CD4-positive, alpha-beta T cell (primary cell): ENCODE measurements at regions of chr17 and their contacts with region 1.

Region 1: DNA sequence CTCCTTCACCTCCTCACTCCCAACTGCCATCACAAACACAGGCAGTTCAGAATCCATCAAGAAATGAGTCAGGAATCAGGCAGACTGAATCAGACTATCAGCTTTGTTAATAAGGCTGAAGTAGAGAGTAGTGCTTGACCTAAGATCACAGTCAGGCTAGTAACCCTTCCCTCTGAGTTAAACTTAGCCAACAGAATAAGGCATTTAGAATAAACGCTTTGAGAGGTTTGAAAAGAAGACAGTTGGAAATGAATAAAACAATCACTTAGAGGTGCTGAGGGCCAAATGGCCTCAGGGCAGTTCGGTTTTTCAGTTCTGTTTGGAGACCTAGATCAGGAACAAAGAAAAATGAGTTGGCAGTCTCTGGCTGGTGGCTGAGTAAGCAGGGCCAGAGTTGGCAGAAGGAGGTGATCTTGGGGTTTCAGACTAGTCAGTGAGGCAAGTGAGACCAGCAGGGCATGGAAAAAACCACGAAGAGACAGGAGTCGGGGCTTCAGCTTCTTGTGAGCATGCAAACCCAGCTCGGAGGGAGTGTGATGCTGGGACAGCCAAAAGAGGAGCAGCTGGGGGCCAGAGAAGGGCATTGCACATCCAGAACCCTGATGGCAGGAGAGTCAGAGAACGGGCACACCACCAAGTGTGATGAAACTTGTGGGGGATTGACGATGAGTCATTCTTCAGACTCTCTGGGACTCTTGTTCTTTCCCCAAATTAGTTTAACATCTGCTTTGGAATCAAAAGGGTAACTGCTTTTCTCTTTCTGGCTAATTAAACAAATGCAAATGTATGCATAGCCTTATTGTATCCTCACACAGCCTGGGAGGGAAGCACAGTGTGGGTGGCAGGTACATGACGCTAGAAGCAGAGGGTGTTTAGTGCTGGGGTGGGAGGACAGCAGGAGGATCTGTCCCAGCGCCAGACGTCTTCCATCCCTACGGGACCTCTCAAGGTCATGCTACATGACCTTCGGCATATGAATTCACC is 54.8 kb downstream of the SPECC1 start:
- DNase-seq: peak in 2 of 14 experiments; percentile 47 to 49
- ATAC-seq: no peak
- H3K4me3 ChIP-seq: no peak overlapping the region
- H3K4me3 Mint-ChIP-seq: no peak overlapping the region
- H3K27ac ChIP-seq: no peak overlapping the region
- H3K27ac Mint-ChIP-seq: no peak overlapping the region
- H3K4me1 ChIP-seq: no peaks in the 10 kb centered on the region
- H3K4me1 Mint-ChIP-seq: no peaks in the 10 kb centered on the region
- H3K27me3 ChIP-seq: no peaks in the 10 kb centered on the region
- H3K27me3 Mint-ChIP-seq: no peaks in the 10 kb centered on the region
- CTCF ChIP-seq: no peak

Region 2: DNA sequence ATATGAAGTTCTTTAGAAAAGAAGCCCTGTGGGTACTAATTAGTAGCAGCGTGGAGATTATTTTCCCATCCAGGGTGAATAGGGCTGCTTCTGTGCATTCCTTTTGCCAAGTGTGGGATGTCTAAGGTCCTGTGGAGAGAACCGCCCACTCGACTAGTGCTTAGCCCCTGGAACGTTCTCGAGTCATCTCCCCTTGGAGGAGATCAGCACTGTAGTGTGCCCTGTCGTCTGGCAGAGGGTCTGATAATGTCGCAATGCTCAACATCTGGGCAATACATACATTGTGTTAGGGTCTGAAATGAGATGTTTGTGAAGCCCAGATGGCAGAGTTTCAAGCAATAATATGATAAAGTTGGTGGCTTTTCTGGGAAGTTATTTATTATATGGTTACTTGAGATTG is 10.0 kb after region 1 on chr17:
- CTCF ChIA-PET with region 1: no interaction called
- POLR2A ChIA-PET with region 1: no interaction called
- intact Hi-C with region 1: no loop called
- DNase-seq: no peak
- ATAC-seq: no peak
- H3K4me3 ChIP-seq: peak overlapping the region; percentile 39
- H3K4me3 Mint-ChIP-seq: peak overlapping the region; percentile 55
- H3K27ac ChIP-seq: no peak overlapping the region
- H3K27ac Mint-ChIP-seq: no peak overlapping the region
- H3K4me1 ChIP-seq: peaks cover 28% of the 10 kb centered on the region
- H3K4me1 Mint-ChIP-seq: peaks cover 17% of the 10 kb centered on the region
- H3K27me3 ChIP-seq: no peaks in the 10 kb centered on the region
- H3K27me3 Mint-ChIP-seq: peaks cover 4% of the 10 kb centered on the region
- CTCF ChIP-seq: no peak

Region 3: GRCh38 chr17:20890338-20890737 is 826.4 kb after region 1 on chr17:
- CTCF ChIA-PET with region 1: no interaction called
- POLR2A ChIA-PET with region 1: no interaction called
- intact Hi-C with region 1: loop called in 1 of 2 experiments (anchors 5 kb)
- DNase-seq: no peak
- ATAC-seq: no peak
- H3K4me3 ChIP-seq: no peak overlapping the region
- H3K4me3 Mint-ChIP-seq: no peak overlapping the region
- H3K27ac ChIP-seq: no peak overlapping the region
- H3K27ac Mint-ChIP-seq: no peak overlapping the region
- H3K4me1 ChIP-seq: no peaks in the 10 kb centered on the region
- H3K4me1 Mint-ChIP-seq: no peaks in the 10 kb centered on the region
- H3K27me3 ChIP-seq: peaks cover 0 to 4% of the 10 kb centered on the region in 2 experiments
- H3K27me3 Mint-ChIP-seq: peaks cover 31% of the 10 kb centered on the region
- CTCF ChIP-seq: no peak